HEK293T (cell line): ENCODE measurements at regions of chr6 and their contacts with region 1.

Region 1: DNA sequence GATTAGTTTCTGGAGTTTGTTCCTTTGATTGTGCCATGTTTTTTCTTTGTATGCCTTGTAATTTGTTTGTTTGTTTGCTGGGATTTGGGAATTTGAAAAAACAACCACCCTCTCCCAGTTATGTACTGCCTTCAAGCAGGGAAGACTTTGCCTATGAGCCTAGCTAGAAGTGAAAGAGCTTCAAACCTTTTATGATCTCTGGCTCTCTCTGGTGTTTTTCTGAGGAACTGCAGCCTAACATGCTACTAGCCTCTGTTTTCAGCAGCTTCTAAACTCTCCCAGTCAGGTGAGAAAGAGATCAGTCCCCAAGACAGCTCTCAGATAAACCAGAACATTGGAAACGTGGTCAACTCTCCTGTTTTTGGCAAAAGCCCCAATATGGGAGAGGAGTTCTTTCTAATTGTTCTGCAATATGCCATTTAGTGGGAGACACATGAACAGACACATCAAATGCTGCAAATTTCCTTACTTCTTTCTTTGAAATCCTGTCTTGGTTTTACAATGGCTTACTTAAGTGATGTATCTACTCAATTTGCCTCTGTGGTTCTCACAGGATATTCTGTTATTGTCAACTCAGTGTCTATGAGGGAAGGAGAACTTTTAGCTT is 58.9 kb upstream of the SERINC1 start:
- DNase-seq: peak; percentile 74

Region 2: GRCh38 chr6:122178988-122179387 is 351.6 kb before region 1 on chr6:
- CTCF ChIA-PET with region 1: no interaction called
- POLR2A ChIA-PET with region 1: no interaction called
- DNase-seq: no peak

Region 3: GRCh38 chr6:122381497-122382265 is 148.9 kb before region 1 on chr6:
- CTCF ChIA-PET with region 1: interaction called, 19 read pairs
- POLR2A ChIA-PET with region 1: no interaction called
- DNase-seq: peak; percentile 78

Region 4: GRCh38 chr6:122491919-122492555 is 38.5 kb before region 1 on chr6:
- CTCF ChIA-PET with region 1: interaction called, 90 read pairs
- POLR2A ChIA-PET with region 1: interaction called, 6 read pairs
- DNase-seq: peak; percentile 75

Region 5: GRCh38 chr6:122520179-122520578 is 10.4 kb before region 1 on chr6:
- CTCF ChIA-PET with region 1: interaction called, 15 read pairs
- POLR2A ChIA-PET with region 1: no interaction called
- DNase-seq: no peak

Region 6: GRCh38 chr6:122553697-122554096 is 23.2 kb after region 1 on chr6:
- CTCF ChIA-PET with region 1: no interaction called
- POLR2A ChIA-PET with region 1: no interaction called
- DNase-seq: no peak